Endothelial cell of umbilical vein (primary cell): ENCODE measurements at regions of chr9 and their contacts with region 1.

Region 1: DNA sequence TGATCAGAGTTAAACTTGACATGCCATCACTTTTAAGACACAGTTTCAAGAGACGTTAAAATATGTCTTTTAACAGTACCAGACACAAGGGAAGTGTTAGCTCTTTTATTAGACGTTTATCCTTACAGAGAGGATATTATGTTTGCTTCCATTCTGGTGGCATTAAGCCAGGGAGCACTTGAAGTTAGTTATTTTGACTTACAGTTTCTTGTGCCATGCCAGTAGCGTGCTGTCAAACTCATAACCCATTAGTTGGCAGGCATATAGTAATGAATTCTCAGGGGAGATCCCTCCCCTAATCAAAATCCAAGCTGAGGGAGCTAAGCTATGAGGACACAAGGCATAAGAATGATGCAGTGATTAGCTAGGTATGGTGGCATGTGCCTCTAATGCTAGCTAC is 66.5 kb downstream of the RPS6 start:
- DNase-seq: no peak
- H3K4me3 ChIP-seq: no peak overlapping the region
- H3K27ac ChIP-seq: no peak overlapping the region
- H3K4me1 ChIP-seq: no peaks in the 10 kb centered on the region
- H3K27me3 ChIP-seq: no peaks in the 10 kb centered on the region
- CTCF ChIP-seq: no peak
- POLR2A ChIP-seq: no peak

Region 2: GRCh38 chr9:19149230-19149629 is 164.3 kb before region 1 on chr9:
- CTCF ChIA-PET with region 1: no interaction called
- POLR2A ChIA-PET with region 1: no interaction called
- dilution Hi-C with region 1: no loop called
- intact Hi-C with region 1: no loop called
- DNase-seq: no peak
- H3K4me3 ChIP-seq: no peak overlapping the region
- H3K27ac ChIP-seq: no peak overlapping the region
- H3K4me1 ChIP-seq: no peaks in the 10 kb centered on the region
- H3K27me3 ChIP-seq: no peaks in the 10 kb centered on the region
- CTCF ChIP-seq: no peak
- POLR2A ChIP-seq: no peak

Region 3: DNA sequence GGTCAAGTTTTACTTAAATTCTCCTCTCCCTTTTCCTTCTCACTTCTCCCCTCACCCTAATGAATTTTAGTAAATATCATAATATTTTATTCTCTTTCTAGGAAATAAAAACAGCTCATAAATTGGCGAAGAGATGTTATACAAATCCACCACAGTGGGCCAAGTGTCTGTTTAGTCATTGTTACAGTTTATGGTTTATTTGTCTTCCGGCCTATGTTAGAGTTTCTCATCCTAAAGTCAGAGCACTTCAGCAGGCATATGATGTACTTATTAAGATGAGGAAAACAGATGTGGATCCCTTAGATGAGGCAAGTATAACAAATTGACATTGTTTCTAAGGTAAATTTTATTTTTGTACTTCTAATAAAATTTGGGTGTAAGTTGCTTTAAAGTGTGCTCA is 18.3 kb after region 1 on chr9:
- CTCF ChIA-PET with region 1: no interaction called
- POLR2A ChIA-PET with region 1: no interaction called
- dilution Hi-C with region 1: no loop called
- intact Hi-C with region 1: loop called (anchors 1 kb)
- DNase-seq: no peak
- H3K4me3 ChIP-seq: no peak overlapping the region
- H3K27ac ChIP-seq: no peak overlapping the region
- H3K4me1 ChIP-seq: no peaks in the 10 kb centered on the region
- H3K27me3 ChIP-seq: no peaks in the 10 kb centered on the region
- CTCF ChIP-seq: no peak
- POLR2A ChIP-seq: no peak